ENCODE measurements at regions of chr9 and their contacts with region 1.

Region 1: DNA sequence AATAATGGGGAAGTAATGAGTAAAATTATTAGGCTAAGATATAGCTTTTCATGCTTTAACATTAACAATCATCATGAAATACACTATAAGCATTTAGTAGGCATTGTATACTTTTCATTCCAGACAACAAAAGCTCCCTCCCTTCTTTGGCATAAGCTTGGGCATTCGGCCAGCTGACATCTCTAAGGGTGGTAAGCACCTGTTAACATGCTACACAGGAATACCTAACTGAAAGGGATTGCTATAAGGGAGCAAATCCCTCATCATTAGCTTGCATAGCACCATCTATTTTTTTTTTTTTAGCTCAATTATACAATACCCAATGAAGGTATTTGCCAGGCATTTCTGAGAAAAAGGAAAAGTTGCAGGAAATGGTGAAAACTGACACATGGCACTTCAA is 16.6 kb downstream of the STRBP start:
- DNase-seq: no peak
- ATAC-seq: no peak
- H3K4me3 Mint-ChIP-seq: no peak overlapping the region
- H3K27ac Mint-ChIP-seq: no peak overlapping the region
- H3K4me1 Mint-ChIP-seq: peaks cover 25% of the 10 kb centered on the region
- H3K27me3 Mint-ChIP-seq: no peaks in the 10 kb centered on the region

Region 2: GRCh38 chr9:122846371-122846940 is 405.3 kb before region 1 on chr9:
- CTCF ChIA-PET with region 1: no interaction called
- POLR2A ChIA-PET with region 1: no interaction called
- intact Hi-C with region 1: no loop called
- DNase-seq: no peak
- ATAC-seq: peak; percentile 48
- H3K4me3 Mint-ChIP-seq: no peak overlapping the region
- H3K27ac Mint-ChIP-seq: peak overlapping the region; percentile 92
- H3K4me1 Mint-ChIP-seq: peaks cover 34% of the 10 kb centered on the region
- H3K27me3 Mint-ChIP-seq: no peaks in the 10 kb centered on the region

Region 3: GRCh38 chr9:123238365-123238764 is 13.4 kb before region 1 on chr9:
- CTCF ChIA-PET with region 1: interaction called, 10 read pairs
- POLR2A ChIA-PET with region 1: no interaction called
- intact Hi-C with region 1: no loop called
- DNase-seq: no peak
- ATAC-seq: no peak
- H3K4me3 Mint-ChIP-seq: no peak overlapping the region
- H3K27ac Mint-ChIP-seq: no peak overlapping the region
- H3K4me1 Mint-ChIP-seq: peaks cover 24% of the 10 kb centered on the region
- H3K27me3 Mint-ChIP-seq: no peaks in the 10 kb centered on the region

Measured in activated CD4-positive, alpha-beta T cell treated with anti-CD3 and anti-CD28 coated beads for 36 hours (primary cell).